ENCODE measurements at regions of chr3 and their contacts with region 1.

Region 1: DNA sequence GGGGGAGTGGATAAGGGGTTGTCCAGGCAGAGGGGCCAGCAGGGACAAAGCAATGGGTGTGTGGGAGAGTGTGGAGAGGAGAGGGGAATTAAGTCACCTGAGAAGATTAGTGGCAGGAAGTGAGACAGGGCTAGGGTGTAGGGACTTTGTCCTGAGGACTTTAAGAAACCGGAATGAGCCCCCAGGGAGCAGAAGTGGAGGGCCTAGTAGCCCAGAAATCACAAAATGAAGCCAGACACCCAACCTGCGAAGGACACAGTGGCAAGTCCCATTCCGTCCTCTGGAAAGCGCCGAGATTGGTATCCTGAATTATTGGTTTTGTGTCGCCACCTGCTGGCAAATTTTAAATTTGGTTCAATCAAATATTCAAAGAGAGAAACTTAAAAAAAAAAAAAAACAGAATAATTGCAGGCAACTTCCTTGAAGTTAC is 78.0 kb upstream of the SLC25A36 start:
- DNase-seq: peak; percentile 45 to 80 (median 59)
- H3K4me3 ChIP-seq: no peak overlapping the region
- H3K27ac ChIP-seq: no peak overlapping the region
- H3K4me1 ChIP-seq: no peaks in the 10 kb centered on the region
- H3K27me3 ChIP-seq: peaks cover 4% of the 10 kb centered on the region
- CTCF ChIP-seq: peak; percentile 44 to 65 (median 55)
- POLR2A ChIP-seq: no peak

Region 2: DNA sequence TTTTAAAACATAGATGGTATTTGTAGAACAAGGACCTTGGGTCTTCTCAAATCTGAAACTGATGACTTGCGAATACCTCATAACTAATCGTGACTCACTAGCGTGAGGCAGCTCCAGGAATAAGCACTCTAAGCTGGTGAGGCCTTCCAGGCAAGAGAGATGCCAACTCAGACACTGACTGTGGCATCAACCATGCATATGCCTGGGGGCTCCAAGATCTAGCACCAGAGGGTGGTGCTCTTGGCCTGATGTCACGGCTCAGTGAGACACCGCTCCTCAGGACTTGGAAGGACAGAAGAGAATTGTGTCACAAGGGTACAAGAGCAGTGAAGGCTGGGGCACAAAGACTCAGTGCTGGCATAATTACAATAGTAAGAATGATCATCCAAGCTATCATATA is 310.7 kb before region 1 on chr3:
- intact Hi-C with region 1: loop called in 1 of 2 experiments (anchors 10 kb)
- DNase-seq: peak in 3 of 7 donors; percentile 12 to 34 (median 25)
- H3K4me3 ChIP-seq: no peak overlapping the region
- H3K27ac ChIP-seq: no peak overlapping the region
- H3K4me1 ChIP-seq: no peaks in the 10 kb centered on the region
- H3K27me3 ChIP-seq: no peaks in the 10 kb centered on the region
- CTCF ChIP-seq: peak in 3 of 6 experiments; percentile 4 to 15 (median 11)
- POLR2A ChIP-seq: no peak